ENCODE measurements at regions of chr11 and their contacts with region 1.

Region 1: GRCh38 chr11:117946842-117947526 is 17.8 kb upstream of the TMPRSS13 start:
- DNase-seq: peak; percentile 85
- H3K4me3 Mint-ChIP-seq: no peak overlapping the region
- H3K27ac Mint-ChIP-seq: peak overlapping the region; percentile 9
- H3K4me1 Mint-ChIP-seq: peaks cover 79% of the 10 kb centered on the region
- H3K27me3 Mint-ChIP-seq: no peaks in the 10 kb centered on the region

Region 2: DNA sequence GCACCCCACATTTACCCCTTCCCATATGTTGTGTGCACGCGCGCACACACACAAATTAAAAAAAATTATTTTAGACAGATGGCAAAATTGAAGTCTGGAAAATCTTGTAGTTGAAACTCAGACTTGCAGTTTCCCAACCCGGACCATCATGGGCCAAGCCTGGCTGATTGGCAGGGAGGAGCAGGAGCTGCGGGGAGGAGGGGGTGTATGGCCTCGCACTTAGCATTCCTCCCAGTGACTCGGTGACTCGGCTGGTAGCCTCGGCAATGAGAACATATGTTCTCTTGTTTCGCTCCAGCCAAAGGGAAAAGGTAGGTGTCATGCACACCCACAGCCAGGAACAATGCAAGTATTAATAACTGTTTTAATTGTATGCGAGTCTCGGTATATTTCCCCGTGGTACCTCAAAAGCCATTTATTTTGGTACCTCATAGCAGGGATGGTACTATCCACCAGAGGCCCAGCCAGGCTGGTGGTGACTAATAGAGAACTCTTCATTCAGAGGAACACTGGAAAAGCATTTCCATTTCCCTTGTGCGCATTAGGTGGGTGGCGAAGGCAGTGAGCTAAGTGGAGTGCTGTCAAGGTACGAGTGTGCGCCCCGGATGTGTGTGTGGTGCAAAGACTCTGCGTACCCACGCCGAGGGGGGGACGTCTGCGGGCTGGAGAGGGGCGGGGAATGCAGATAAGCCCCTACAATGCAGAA is 242.4 kb before region 1 on chr11:
- CTCF ChIA-PET with region 1: no interaction called
- POLR2A ChIA-PET with region 1: no interaction called
- DNase-seq: no peak
- H3K4me3 Mint-ChIP-seq: no peak overlapping the region
- H3K27ac Mint-ChIP-seq: no peak overlapping the region
- H3K4me1 Mint-ChIP-seq: peaks cover 9% of the 10 kb centered on the region
- H3K27me3 Mint-ChIP-seq: peaks cover 10% of the 10 kb centered on the region

Region 3: GRCh38 chr11:117817368-117818040 is 129.5 kb before region 1 on chr11:
- CTCF ChIA-PET with region 1: interaction called, 29 read pairs
- POLR2A ChIA-PET with region 1: no interaction called
- DNase-seq: peak; percentile 85
- H3K4me3 Mint-ChIP-seq: no peak overlapping the region
- H3K27ac Mint-ChIP-seq: peak overlapping the region; percentile 92
- H3K4me1 Mint-ChIP-seq: peaks cover 64% of the 10 kb centered on the region
- H3K27me3 Mint-ChIP-seq: no peaks in the 10 kb centered on the region

Region 4: DNA sequence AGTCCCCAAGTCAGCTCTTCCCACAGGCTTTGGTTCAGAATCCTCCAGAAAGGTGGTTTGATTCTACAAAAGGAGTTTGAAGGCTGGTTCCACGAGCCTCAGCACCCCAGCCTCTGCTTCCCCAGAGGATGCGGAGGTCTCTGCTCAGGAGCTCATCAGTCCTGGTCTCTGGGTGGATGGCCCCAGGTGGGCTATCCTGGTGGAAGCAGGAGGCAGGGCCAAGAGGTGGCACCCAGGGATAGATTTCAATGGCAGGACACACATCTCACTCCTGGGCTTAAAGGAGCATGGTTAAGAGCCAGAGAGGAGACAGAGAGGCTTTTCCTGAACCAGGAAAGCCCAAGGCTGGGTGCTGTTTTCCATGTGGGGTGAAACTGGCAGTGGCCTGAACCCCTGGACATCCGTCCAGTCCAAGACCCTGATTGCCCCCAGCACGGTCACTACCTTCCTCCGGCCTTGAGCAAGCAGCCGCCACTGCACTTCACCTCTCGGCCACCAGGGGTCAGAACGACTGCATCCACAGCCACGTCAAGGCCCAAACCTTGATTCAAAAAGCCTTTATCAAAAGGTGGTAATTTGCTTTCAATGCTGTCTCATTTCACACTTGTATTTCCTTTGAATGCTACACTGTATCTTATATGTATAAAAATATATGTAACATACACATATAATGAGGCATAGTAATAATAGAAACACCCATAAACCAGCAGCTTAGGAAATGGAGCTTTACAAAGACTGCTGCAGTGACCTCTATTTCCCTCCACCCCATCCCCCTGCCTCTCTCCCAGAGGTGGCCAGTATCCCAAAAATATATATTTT is 103.1 kb before region 1 on chr11:
- CTCF ChIA-PET with region 1: interaction called, 31 read pairs
- POLR2A ChIA-PET with region 1: no interaction called
- DNase-seq: peak; percentile 84
- H3K4me3 Mint-ChIP-seq: no peak overlapping the region
- H3K27ac Mint-ChIP-seq: no peak overlapping the region
- H3K4me1 Mint-ChIP-seq: no peaks in the 10 kb centered on the region
- H3K27me3 Mint-ChIP-seq: peaks cover 6% of the 10 kb centered on the region

Region 5: GRCh38 chr11:117932067-117932370 is 15.0 kb before region 1 on chr11:
- CTCF ChIA-PET with region 1: interaction called, 53 read pairs
- POLR2A ChIA-PET with region 1: no interaction called
- DNase-seq: no peak
- H3K4me3 Mint-ChIP-seq: no peak overlapping the region
- H3K27ac Mint-ChIP-seq: peak overlapping the region; percentile 55
- H3K4me1 Mint-ChIP-seq: peaks cover 51% of the 10 kb centered on the region
- H3K27me3 Mint-ChIP-seq: peaks cover 11% of the 10 kb centered on the region

Region 6: GRCh38 chr11:117970400-117971024 is 23.5 kb after region 1 on chr11:
- CTCF ChIA-PET with region 1: interaction called, 10 read pairs
- POLR2A ChIA-PET with region 1: no interaction called
- DNase-seq: peak; percentile 46
- H3K4me3 Mint-ChIP-seq: peak overlapping the region; percentile 5
- H3K27ac Mint-ChIP-seq: peak overlapping the region; percentile 56
- H3K4me1 Mint-ChIP-seq: peaks cover 59% of the 10 kb centered on the region
- H3K27me3 Mint-ChIP-seq: no peaks in the 10 kb centered on the region

Region 7: GRCh38 chr11:118002541-118003423 is 55.8 kb after region 1 on chr11:
- CTCF ChIA-PET with region 1: interaction called, 25 read pairs
- POLR2A ChIA-PET with region 1: interaction called, 6 read pairs
- DNase-seq: peak; percentile 60
- H3K4me3 Mint-ChIP-seq: peak overlapping the region; percentile 58
- H3K27ac Mint-ChIP-seq: peak overlapping the region; percentile 90
- H3K4me1 Mint-ChIP-seq: peaks cover 100% of the 10 kb centered on the region
- H3K27me3 Mint-ChIP-seq: no peaks in the 10 kb centered on the region

Region 8: DNA sequence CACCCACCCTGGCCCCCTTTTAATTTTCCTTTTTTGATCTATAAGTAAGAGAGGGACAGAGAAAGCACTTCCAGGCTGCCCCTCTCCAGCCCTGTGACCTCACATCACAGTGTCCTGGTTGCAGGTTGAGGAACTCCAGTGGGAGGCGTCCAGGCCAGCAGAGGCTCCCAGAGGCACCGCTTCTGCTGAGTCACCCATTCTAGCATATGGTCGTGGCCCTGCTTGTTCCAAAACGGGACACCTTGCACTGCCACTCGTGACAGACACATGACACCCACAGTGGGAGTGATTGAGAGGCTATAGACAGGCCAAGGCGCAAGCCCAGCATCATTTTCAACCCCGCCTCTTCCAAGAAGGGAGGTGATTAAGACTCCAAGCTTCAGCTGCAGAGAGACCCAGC is 113.9 kb after region 1 on chr11:
- CTCF ChIA-PET with region 1: interaction called, 10 read pairs
- POLR2A ChIA-PET with region 1: no interaction called
- DNase-seq: no peak
- H3K4me3 Mint-ChIP-seq: no peak overlapping the region
- H3K27ac Mint-ChIP-seq: no peak overlapping the region
- H3K4me1 Mint-ChIP-seq: peaks cover 8% of the 10 kb centered on the region
- H3K27me3 Mint-ChIP-seq: no peaks in the 10 kb centered on the region